ENCODE measurements at regions of chr16 and their contacts with region 1.

Region 1: DNA sequence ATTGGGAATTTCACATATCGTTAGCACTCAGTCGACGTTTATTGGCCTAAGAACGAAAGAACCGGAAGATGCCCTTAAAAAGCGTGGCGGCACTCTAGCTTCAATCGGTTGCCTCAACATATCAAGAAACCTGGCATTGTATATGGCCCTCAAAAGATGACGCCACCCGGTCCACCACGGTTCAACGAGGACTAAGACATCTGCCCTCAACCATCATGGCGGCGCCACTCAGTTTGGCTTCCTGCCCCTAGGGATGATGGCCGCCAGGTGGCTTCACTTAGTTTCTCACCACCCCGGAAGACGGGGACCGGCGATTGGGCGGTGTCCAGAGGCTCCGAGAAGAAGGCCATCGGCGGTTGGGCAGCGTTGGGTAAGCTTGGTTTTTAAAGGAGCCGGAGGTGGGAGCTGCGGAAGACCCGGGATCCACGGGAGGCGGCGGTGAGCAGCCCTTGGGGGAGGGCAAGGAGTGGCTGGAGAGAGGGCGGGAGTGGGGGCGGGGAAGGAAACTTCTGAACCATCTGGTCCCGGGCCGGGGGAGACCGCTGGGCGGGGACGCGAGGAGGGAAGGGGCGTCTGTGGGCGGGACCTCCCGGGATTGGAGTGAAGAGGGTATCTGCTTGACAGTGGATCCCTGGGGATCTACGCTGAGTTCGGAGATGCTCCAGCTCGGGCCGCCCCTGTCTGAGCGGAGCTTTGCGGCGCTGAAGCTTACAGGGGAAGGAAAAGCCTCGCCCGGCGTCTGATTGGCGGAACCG is at the start of gene PRR14:
- DNase-seq: peak; percentile 90
- ATAC-seq: peak; percentile 72
- H3K4me3 Mint-ChIP-seq: peak within 1 kb of the TSS; percentile 96
- H3K27ac Mint-ChIP-seq: peak within 1 kb of the TSS; percentile 95
- H3K4me1 Mint-ChIP-seq: peaks cover 24% of the 10 kb centered on the region
- H3K27me3 Mint-ChIP-seq: no peaks in the 10 kb centered on the region
- CTCF ChIP-seq: no peak
- total RNA-seq, gene PRR14: 63.5 and 77.9 TPM in 2 replicates

Region 2: GRCh38 chr16:30378236-30379204 is 272.0 kb before region 1 on chr16:
- CTCF ChIA-PET with region 1: interaction called, 3 read pairs
- POLR2A ChIA-PET with region 1: interaction called, 4 read pairs
- intact Hi-C with region 1: loop called (anchors 2 kb)
- DNase-seq: peak; percentile 99
- ATAC-seq: peak; percentile 88
- H3K4me3 Mint-ChIP-seq: peak overlapping the region; percentile 92
- H3K27ac Mint-ChIP-seq: peak overlapping the region; percentile 100
- H3K4me1 Mint-ChIP-seq: peaks cover 62% of the 10 kb centered on the region
- H3K27me3 Mint-ChIP-seq: no peaks in the 10 kb centered on the region
- CTCF ChIP-seq: no peak

Region 3: GRCh38 chr16:30557957-30558788 is 92.4 kb before region 1 on chr16 and contains the start of gene ZNF764:
- CTCF ChIA-PET with region 1: interaction called, 4 read pairs
- POLR2A ChIA-PET with region 1: interaction called, 8 read pairs
- intact Hi-C with region 1: loop called (anchors 1 kb)
- DNase-seq: peak; percentile 91
- ATAC-seq: peak; percentile 93
- H3K4me3 Mint-ChIP-seq: peak within 1 kb of the TSS; percentile 83
- H3K27ac Mint-ChIP-seq: peak within 1 kb of the TSS; percentile 84
- H3K4me1 Mint-ChIP-seq: peaks cover 43% of the 10 kb centered on the region
- H3K27me3 Mint-ChIP-seq: no peaks in the 10 kb centered on the region
- CTCF ChIP-seq: no peak
- total RNA-seq, gene ZNF764: 16.1 and 19.2 TPM in 2 replicates

Region 4: DNA sequence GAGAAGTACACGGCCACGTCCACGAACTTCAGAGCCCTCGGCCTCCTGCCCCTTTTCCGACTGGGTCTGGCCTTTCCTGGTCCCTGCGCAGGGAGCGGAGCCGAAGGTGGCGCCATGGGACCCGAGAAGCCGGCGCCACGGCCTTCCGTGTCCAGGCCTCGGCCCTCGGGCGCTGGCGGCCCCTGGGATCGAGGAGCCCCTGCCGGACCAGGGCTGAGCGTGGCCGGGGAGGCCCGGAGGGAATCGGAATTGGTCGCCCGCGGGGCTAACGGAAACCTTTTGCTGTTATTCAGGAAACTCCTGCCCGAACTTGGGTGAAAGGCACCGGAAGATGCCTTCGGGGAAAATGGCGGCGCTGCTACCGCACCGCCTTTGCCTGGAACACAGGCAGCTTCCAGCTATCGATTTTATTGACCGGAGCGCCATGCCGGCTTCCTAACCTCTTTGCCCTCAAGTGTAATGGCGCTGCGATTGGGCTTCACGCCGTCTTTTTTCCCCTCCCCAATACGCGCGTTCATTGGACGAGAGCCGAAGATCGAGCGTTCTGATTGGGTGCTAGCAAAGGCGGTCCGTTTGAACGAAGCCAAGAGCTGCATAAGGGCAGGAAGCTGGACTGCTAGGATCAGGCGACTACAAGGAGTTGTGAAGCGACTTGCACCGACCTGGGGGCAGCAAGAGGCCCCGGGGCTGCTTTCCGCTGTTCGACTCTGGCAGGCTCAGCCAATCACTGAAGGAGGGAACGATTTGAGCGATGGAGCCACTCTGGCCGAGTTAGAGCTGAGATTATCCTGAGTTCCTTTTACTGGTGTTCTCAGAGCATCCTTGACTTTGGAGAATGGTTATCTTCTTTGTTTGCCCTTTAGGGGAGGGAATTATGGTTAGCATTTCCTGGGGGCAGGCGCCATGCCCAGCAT is 40.4 kb before region 1 on chr16 and contains the start of gene ZNF689:
- CTCF ChIA-PET with region 1: no interaction called
- POLR2A ChIA-PET with region 1: interaction called, 8 read pairs
- intact Hi-C with region 1: loop called (anchors 1 kb)
- DNase-seq: peak; percentile 90
- ATAC-seq: peak; percentile 87
- H3K4me3 Mint-ChIP-seq: peak within 1 kb of the TSS; percentile 93
- H3K27ac Mint-ChIP-seq: peak within 1 kb of the TSS; percentile 95
- H3K4me1 Mint-ChIP-seq: peaks cover 19% of the 10 kb centered on the region
- H3K27me3 Mint-ChIP-seq: no peaks in the 10 kb centered on the region
- CTCF ChIP-seq: no peak
- total RNA-seq, gene ZNF689: 10.1 and 11.6 TPM in 2 replicates

Region 5: GRCh38 chr16:30637942-30638341 is 12.6 kb before region 1 on chr16:
- CTCF ChIA-PET with region 1: interaction called, 3 read pairs
- POLR2A ChIA-PET with region 1: interaction called, 45 read pairs
- intact Hi-C with region 1: loop called (anchors 1 kb)
- DNase-seq: no peak
- ATAC-seq: no peak
- H3K4me3 Mint-ChIP-seq: no peak overlapping the region
- H3K27ac Mint-ChIP-seq: no peak overlapping the region
- H3K4me1 Mint-ChIP-seq: peaks cover 21% of the 10 kb centered on the region
- H3K27me3 Mint-ChIP-seq: no peaks in the 10 kb centered on the region
- CTCF ChIP-seq: no peak

Region 6: GRCh38 chr16:30747799-30748634 is 97.5 kb after region 1 on chr16 and contains the start of gene PHKG2:
- CTCF ChIA-PET with region 1: no interaction called
- POLR2A ChIA-PET with region 1: no interaction called
- intact Hi-C with region 1: loop called (anchors 2 kb)
- DNase-seq: peak; percentile 90
- ATAC-seq: peak; percentile 98
- H3K4me3 Mint-ChIP-seq: peak within 1 kb of the TSS; percentile 91
- H3K27ac Mint-ChIP-seq: peak within 1 kb of the TSS; percentile 87
- H3K4me1 Mint-ChIP-seq: peaks cover 24% of the 10 kb centered on the region
- H3K27me3 Mint-ChIP-seq: no peaks in the 10 kb centered on the region
- CTCF ChIP-seq: no peak
- total RNA-seq, gene PHKG2: 45.3 and 51.4 TPM in 2 replicates

Region 7: GRCh38 chr16:30813821-30814189 is 163.3 kb after region 1 on chr16:
- CTCF ChIA-PET with region 1: no interaction called
- POLR2A ChIA-PET with region 1: no interaction called
- intact Hi-C with region 1: loop called (anchors 5 kb)
- DNase-seq: no peak
- ATAC-seq: no peak
- H3K4me3 Mint-ChIP-seq: peak overlapping the region; percentile 84
- H3K27ac Mint-ChIP-seq: peak overlapping the region; percentile 75
- H3K4me1 Mint-ChIP-seq: peaks cover 13% of the 10 kb centered on the region
- H3K27me3 Mint-ChIP-seq: no peaks in the 10 kb centered on the region
- CTCF ChIP-seq: no peak

Region 8: GRCh38 chr16:30948667-30949649 is 298.4 kb after region 1 on chr16 and contains the start of gene ORAI3:
- CTCF ChIA-PET with region 1: no interaction called
- POLR2A ChIA-PET with region 1: no interaction called
- intact Hi-C with region 1: no loop called
- DNase-seq: peak; percentile 73
- ATAC-seq: peak; percentile 82
- H3K4me3 Mint-ChIP-seq: peak within 1 kb of the TSS; percentile 92
- H3K27ac Mint-ChIP-seq: peak within 1 kb of the TSS; percentile 86
- H3K4me1 Mint-ChIP-seq: peaks cover 27% of the 10 kb centered on the region
- H3K27me3 Mint-ChIP-seq: no peaks in the 10 kb centered on the region
- CTCF ChIP-seq: no peak
- total RNA-seq, gene ORAI3: 25.1 and 30.6 TPM in 2 replicates